Activated naive CD4-positive, alpha-beta T cell treated with anti-CD3 and anti-CD28 coated beads for 36 hours (primary cell): ENCODE measurements at regions of chr12 and their contacts with region 1.

Region 1: GRCh38 chr12:107317751-107318613 is 224.6 kb upstream of the CRY1 start:
- DNase-seq: peak; percentile 92
- H3K4me3 Mint-ChIP-seq: peak overlapping the region; percentile 85
- H3K27ac Mint-ChIP-seq: no peak overlapping the region
- H3K4me1 Mint-ChIP-seq: peaks cover 24% of the 10 kb centered on the region
- H3K27me3 Mint-ChIP-seq: no peaks in the 10 kb centered on the region

Region 2: DNA sequence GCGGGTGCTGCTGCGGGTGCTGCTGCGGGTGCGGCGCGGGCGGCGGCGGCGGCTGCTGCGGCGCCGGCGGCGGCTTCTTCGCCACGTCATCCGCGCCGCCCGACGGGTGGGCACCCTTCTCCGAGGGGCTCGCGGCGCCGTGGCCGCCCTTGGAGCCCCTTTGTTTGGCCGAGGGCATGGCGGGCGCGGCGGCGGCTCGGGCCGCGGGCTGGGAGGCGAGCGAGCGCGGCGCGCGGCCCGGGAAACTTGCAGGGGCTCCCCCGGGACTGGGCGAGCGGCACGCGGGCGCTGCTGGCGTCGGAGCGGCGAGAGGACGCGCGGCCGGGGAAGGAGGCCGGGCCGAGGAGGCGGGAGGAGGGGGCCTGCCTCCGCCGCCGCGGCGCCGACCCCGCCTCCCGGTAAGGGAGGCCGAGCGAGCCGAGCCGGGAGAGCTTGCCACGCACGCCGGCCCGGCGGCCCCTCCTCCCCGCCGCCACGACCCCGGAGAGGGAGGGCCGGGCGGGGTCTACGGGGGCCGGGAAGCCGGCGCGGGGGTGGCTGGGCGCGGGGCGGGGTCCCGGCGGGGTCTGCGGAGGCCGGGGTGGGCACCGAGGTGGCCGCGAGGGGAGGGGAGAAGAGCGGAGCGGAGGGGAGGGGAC is 1070.2 kb before region 1 on chr12 and contains the start of gene CKAP4:
- CTCF ChIA-PET with region 1: no interaction called
- intact Hi-C with region 1: loop called (anchors 10 kb)
- DNase-seq: peak; percentile 60
- H3K4me3 Mint-ChIP-seq: peak within 1 kb of the TSS; percentile 75
- H3K27ac Mint-ChIP-seq: peak within 1 kb of the TSS; percentile 85
- H3K4me1 Mint-ChIP-seq: peaks cover 24% of the 10 kb centered on the region
- H3K27me3 Mint-ChIP-seq: no peaks in the 10 kb centered on the region
- total RNA-seq, gene CKAP4: 19.0 to 19.1 TPM

Region 3: GRCh38 chr12:106955377-106956047 is 362.5 kb before region 1 on chr12 and contains the start of gene TMEM263:
- CTCF ChIA-PET with region 1: no interaction called
- intact Hi-C with region 1: loop called (anchors 5 kb)
- DNase-seq: peak; percentile 87
- H3K4me3 Mint-ChIP-seq: peak within 1 kb of the TSS; percentile 99
- H3K27ac Mint-ChIP-seq: peak within 1 kb of the TSS; percentile 91
- H3K4me1 Mint-ChIP-seq: peaks cover 14% of the 10 kb centered on the region
- H3K27me3 Mint-ChIP-seq: no peaks in the 10 kb centered on the region
- total RNA-seq, gene TMEM263: 29.1 to 30.4 TPM

Region 4: DNA sequence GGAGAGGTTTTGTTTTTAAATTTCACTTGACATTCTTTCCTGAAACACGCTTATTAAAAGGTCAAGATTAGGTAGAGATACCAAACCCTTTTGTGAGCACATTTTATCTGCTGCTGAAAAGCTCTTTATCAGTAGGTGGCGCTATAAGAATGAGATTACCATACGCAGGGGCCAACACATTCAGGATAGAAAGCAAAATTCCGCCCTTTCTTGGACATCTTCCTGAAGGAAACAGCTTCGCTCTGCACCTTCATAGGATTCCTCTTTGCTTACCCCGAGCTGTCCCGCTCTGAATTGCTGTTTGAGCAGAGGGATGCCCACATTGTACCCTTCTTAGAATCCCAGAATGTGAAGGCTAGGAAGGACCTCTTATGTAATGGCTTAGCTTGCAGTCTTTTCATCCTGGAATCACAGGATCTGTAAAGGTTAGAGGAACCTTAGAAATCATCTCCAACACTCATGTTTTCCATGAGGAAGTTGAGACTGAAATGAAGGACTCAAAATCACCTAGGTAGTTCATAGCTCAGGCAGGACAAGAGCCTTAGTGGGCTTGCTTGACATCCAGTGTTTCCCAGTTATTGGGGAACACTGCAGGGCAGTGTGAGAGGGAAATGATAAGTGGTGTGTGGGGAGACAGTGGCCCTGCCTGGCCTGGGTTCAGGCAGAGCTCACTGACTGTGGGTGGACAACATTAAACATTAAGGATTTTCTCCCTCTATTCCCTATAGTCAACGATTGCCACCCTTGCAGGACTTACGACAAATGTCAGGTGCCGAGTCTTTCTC is 186.0 kb before region 1 on chr12:
- CTCF ChIA-PET with region 1: interaction called, 10 read pairs
- intact Hi-C with region 1: loop called (anchors 2 kb)
- DNase-seq: no peak
- H3K4me3 Mint-ChIP-seq: no peak overlapping the region
- H3K27ac Mint-ChIP-seq: no peak overlapping the region
- H3K4me1 Mint-ChIP-seq: no peaks in the 10 kb centered on the region
- H3K27me3 Mint-ChIP-seq: no peaks in the 10 kb centered on the region

Region 5: GRCh38 chr12:107372229-107372658 is 54.3 kb after region 1 on chr12:
- CTCF ChIA-PET with region 1: interaction called, 47 read pairs
- intact Hi-C with region 1: loop called (anchors 1 kb)
- DNase-seq: peak; percentile 72
- H3K4me3 Mint-ChIP-seq: peak overlapping the region; percentile 32
- H3K27ac Mint-ChIP-seq: peak overlapping the region; percentile 83
- H3K4me1 Mint-ChIP-seq: peaks cover 77% of the 10 kb centered on the region
- H3K27me3 Mint-ChIP-seq: no peaks in the 10 kb centered on the region

Region 6: DNA sequence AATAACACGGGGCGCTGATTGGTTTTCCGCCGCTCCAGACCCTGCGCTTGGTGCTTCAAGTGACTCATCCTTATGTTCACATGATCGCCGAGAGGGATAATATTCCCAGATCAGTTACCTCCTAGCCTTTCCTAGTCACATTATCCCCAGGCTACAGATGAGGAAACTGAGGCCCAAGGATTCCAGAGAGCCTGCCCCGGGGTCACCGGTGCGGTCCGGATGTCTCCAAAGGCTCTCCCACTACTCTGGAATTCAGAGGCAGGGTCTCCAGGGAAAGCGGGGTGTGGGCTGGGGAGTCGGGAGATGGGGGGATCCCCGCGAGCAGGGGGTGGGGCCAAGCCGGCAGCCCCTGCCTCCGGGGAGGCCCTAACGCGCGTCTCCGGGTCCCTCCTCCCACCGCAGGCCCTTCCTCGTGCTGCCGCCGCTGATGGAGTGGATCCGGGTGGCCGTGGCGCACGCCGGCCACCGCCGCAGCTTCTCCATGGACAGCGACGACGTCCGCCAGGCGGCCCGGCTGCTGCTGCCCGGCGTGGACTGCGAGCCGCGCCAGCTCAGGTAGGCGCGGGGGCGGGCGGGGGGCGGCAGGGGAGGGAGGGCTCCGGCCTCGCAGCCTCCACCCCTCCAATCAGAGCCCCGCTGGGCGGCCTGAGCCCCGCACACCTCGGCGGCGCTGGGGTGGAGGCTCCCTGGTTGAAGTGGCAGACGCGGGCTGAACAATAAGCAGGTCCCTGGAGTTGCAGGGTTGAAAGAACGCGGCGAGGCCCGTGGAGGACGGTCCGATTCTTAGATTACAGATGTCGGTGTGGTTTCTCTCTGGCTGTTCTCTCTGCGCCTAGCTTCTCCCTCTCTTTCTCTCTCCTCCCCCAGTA is 263.0 kb after region 1 on chr12:
- CTCF ChIA-PET with region 1: no interaction called
- intact Hi-C with region 1: no loop called
- DNase-seq: no peak
- H3K4me3 Mint-ChIP-seq: no peak overlapping the region
- H3K27ac Mint-ChIP-seq: no peak overlapping the region
- H3K4me1 Mint-ChIP-seq: no peaks in the 10 kb centered on the region
- H3K27me3 Mint-ChIP-seq: no peaks in the 10 kb centered on the region

Region 7: DNA sequence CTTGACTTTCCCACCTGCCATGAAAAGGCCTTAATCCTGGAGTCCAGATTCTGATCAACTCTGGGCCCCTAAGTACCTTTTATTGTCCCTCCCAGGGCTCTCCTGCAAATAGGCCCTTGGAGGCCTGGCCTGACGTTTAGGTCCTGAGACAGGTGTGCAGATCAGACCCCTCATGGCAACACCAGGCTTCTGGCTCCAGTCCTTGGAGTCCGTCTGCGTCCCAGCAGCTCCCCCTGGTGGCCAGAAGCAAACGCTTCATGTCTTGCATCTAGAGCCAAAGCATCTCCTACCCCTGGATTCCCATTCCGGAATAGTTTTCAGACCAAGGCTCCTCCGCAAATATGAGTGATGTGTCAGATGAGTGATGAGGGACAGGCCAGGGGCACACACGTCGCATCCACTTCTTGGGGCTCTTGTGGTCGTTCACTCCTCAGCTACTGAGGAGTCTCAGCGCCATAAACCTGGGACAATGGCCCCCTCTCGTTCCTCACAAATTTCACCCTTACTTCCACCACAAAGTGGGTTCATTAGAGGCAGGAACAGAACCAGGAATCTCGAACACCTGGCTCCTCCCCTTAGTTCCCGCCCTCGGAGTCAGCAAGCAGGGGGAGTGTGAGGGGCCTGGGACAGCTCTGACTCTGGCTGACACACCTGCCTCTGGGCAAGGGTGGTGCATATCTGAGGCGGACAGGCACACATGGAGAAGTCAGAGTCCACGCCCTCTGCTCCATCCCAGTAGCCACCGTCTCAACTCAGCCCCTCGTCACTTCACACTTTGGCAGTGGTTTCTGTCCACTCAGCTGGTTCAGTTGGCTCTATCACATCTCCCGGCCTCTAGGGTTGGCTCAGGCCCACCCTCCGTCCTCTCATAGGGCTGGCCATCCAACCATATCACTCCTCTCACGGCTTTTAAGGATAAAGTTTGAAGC is 289.7 kb after region 1 on chr12:
- CTCF ChIA-PET with region 1: interaction called, 3 read pairs
- intact Hi-C with region 1: loop called (anchors 1 kb)
- DNase-seq: peak; percentile 87
- H3K4me3 Mint-ChIP-seq: no peak overlapping the region
- H3K27ac Mint-ChIP-seq: no peak overlapping the region
- H3K4me1 Mint-ChIP-seq: no peaks in the 10 kb centered on the region
- H3K27me3 Mint-ChIP-seq: no peaks in the 10 kb centered on the region

Region 8: GRCh38 chr12:107760809-107761501 is 443.0 kb after region 1 on chr12 and contains the start of gene PRDM4:
- CTCF ChIA-PET with region 1: no interaction called
- intact Hi-C with region 1: loop called (anchors 5 kb)
- DNase-seq: peak; percentile 92
- H3K4me3 Mint-ChIP-seq: peak within 1 kb of the TSS; percentile 93
- H3K27ac Mint-ChIP-seq: peak within 1 kb of the TSS; percentile 83
- H3K4me1 Mint-ChIP-seq: peaks cover 24% of the 10 kb centered on the region
- H3K27me3 Mint-ChIP-seq: no peaks in the 10 kb centered on the region
- total RNA-seq, gene PRDM4: 18.8 to 20.6 TPM